BJ (cell line): ENCODE measurements at regions of chr2 and their contacts with region 1.

Region 1: GRCh38 chr2:74334931-74335333 is 8.3 kb downstream of the SLC4A5 start:
- DNase-seq: peak; percentile 20
- H3K4me3 ChIP-seq: no peak overlapping the region
- H3K27me3 ChIP-seq: no peaks in the 10 kb centered on the region
- CTCF ChIP-seq: peak; percentile 98

Region 2: DNA sequence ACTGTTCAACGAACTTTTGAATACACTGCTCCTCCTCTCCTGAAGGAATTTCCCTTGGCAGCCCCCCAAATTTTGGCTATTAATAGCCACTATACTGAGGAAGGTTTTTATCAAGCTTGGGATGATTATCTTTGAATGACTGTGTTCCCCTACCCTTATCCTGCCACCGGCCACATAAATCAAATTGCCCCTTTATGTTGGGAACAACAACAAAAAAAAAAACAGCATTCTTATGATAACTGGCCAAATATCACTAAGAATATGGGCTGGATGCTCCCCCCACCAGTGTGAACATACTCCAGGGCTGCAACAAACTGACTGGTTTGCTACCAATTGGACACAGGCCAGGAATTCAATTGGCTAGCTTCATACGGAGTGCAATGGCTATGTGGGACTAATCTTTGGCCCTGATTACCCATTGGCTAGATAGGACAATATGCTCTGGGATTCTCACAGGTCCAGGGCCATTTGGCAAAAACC is 575.6 kb before region 1 on chr2:
- CTCF ChIA-PET with region 1: no interaction called
- POLR2A ChIA-PET with region 1: no interaction called
- DNase-seq: no peak
- H3K4me3 ChIP-seq: no peak overlapping the region
- H3K27me3 ChIP-seq: no peaks in the 10 kb centered on the region
- CTCF ChIP-seq: no peak

Region 3: GRCh38 chr2:73828818-73829570 is 505.9 kb before region 1 on chr2 and contains the start of gene STAMBP:
- CTCF ChIA-PET with region 1: interaction called, 75 read pairs
- POLR2A ChIA-PET with region 1: no interaction called
- DNase-seq: peak; percentile 73
- H3K4me3 ChIP-seq: peak within 1 kb of the TSS; percentile 81
- H3K27me3 ChIP-seq: no peaks in the 10 kb centered on the region; the same call in 1 of the 2 replicates
- CTCF ChIP-seq: no peak
- polyA plus RNA-seq, gene STAMBP: 47.9 and 48.4 TPM in 2 replicates

Region 4: GRCh38 chr2:74278176-74278575 is 56.8 kb before region 1 on chr2:
- CTCF ChIA-PET with region 1: interaction called, 10 read pairs
- POLR2A ChIA-PET with region 1: no interaction called
- DNase-seq: no peak
- H3K4me3 ChIP-seq: no peak overlapping the region
- H3K27me3 ChIP-seq: no peaks in the 10 kb centered on the region; the same call in 1 of the 2 replicates
- CTCF ChIP-seq: no peak

Region 5: DNA sequence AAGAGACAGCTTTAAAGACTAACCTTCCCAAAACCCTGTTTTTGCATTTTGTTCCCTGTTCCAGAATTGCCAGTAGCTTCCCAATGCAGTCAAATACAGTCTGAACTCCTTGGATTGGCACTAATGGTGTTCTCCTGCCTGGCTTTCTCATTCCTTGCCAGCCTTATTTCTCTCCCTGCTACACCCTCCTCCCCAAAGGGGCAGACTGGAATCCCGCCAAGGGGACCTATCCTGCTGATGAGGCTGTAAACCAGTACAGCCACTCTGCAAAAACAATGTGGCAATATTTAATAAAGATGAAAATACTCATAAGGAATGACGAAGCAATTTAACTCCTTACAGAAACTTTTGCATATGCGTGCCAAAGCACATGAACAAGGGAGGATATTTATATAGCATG is 12.8 kb after region 1 on chr2:
- CTCF ChIA-PET with region 1: interaction called, 14 read pairs
- POLR2A ChIA-PET with region 1: no interaction called
- DNase-seq: no peak
- H3K4me3 ChIP-seq: no peak overlapping the region
- H3K27me3 ChIP-seq: no peaks in the 10 kb centered on the region
- CTCF ChIP-seq: no peak

Region 6: GRCh38 chr2:74367789-74368188 is 32.9 kb after region 1 on chr2:
- CTCF ChIA-PET with region 1: no interaction called
- POLR2A ChIA-PET with region 1: no interaction called
- DNase-seq: no peak
- H3K4me3 ChIP-seq: no peak overlapping the region
- H3K27me3 ChIP-seq: no peaks in the 10 kb centered on the region
- CTCF ChIP-seq: no peak

Region 7: GRCh38 chr2:74391580-74392448 is 56.9 kb after region 1 on chr2:
- CTCF ChIA-PET with region 1: interaction called, 50 read pairs
- POLR2A ChIA-PET with region 1: no interaction called
- DNase-seq: no peak
- H3K4me3 ChIP-seq: peak overlapping the region; percentile 81
- H3K27me3 ChIP-seq: no peaks in the 10 kb centered on the region
- CTCF ChIP-seq: peak; percentile 97

Region 8: GRCh38 chr2:74458132-74458925 is 123.4 kb after region 1 on chr2 and contains the start of gene WBP1:
- CTCF ChIA-PET with region 1: interaction called, 11 read pairs
- POLR2A ChIA-PET with region 1: no interaction called
- DNase-seq: peak; percentile 100
- H3K4me3 ChIP-seq: peak within 1 kb of the TSS; percentile 86
- H3K27me3 ChIP-seq: no peaks in the 10 kb centered on the region
- CTCF ChIP-seq: no peak
- polyA plus RNA-seq, gene WBP1: 55.7 and 92.0 TPM in 2 replicates

Region 9: DNA sequence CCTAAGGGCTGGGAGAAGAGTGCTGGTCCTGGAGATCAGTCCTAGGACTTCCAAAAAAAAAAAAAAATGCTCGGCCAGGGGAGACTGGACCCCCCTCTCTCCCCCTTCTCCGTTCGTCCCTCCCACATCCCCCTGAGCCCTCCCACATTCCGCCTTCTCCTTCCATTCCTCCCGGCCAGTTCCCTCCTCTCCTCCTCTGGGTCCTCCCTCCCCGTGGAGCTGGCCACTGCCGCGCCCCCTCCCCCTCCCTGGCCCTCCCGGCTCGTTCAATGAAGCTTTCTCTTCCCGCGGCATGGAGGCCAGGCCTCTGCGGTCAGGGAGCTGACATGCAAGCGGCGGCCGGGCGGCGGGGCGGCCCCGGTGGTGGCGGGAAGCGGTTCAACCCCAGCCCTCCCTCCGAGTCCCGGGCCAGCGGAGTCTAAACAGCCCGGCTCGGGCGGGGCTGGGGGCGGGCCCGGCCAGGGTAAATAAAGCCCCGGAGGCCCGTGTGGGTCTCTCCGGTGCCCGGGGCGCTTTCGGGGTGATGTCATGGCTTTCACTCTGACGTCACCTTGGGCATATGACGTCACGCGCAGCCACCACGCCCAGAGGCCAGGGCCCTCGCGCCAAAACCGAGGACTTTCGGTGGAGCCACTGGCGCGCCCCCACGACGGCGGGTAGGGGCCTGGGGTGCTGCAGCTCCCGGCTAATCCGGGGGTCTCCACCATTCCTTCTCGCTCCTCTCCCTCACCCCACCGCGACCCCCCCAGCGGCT is 219.1 kb after region 1 on chr2 and contains the start of gene LOXL3:
- CTCF ChIA-PET with region 1: no interaction called
- POLR2A ChIA-PET with region 1: no interaction called
- DNase-seq: peak; percentile 50
- H3K4me3 ChIP-seq: peak within 1 kb of the TSS; percentile 54
- H3K27me3 ChIP-seq: no peaks in the 10 kb centered on the region
- CTCF ChIP-seq: no peak
- polyA plus RNA-seq, gene LOXL3: 95.8 and 130 TPM in 2 replicates